Body of pancreas (tissue), 4 donors: ENCODE measurements at regions of chr14 and their contacts with region 1.

Region 1: GRCh38 chr14:91323671-91324605 is 79.4 kb upstream of the GPR68 start:
- DNase-seq: peak; percentile 80 to 90 (median 88)
- ATAC-seq: peak; percentile 74
- H3K4me3 ChIP-seq: no peak overlapping the region
- H3K27ac ChIP-seq: peak overlapping the region in 2 of 4 donors; percentile 27 to 45
- H3K4me1 ChIP-seq: no peaks in the 10 kb centered on the region
- H3K27me3 ChIP-seq: no peaks in the 10 kb centered on the region
- CTCF ChIP-seq: peak; percentile 90 to 96 (median 92)
- POLR2A ChIP-seq: no peak

Region 2: DNA sequence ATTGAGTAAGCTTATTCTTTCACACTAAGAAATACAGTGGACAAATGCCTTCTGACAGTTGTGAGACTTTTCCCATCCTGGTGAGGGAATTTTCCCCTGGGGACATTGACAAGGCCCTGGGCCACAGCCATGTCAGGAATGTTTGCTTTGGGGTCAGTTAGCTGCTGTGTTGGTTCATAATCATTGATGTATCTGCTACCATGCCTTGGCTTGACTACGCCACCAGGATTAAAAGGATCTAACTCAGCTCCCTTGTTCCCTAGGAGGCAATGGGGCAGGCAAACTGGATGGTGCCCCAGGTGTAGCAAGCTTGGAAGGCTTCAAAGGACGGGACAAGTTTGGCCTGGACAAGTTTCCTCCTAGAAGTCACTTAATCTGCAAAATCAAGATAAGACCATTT is 96.7 kb after region 1 on chr14:
- intact Hi-C with region 1: loop called (anchors 2 kb)
- DNase-seq: no peak
- ATAC-seq: no peak
- H3K4me3 ChIP-seq: no peak overlapping the region
- H3K27ac ChIP-seq: no peak overlapping the region
- H3K4me1 ChIP-seq: peaks cover 33% of the 10 kb centered on the region
- H3K27me3 ChIP-seq: no peaks in the 10 kb centered on the region
- CTCF ChIP-seq: no peak
- POLR2A ChIP-seq: no peak